Ascending aorta (tissue), 2 donors: ENCODE measurements at regions of chr18 and their contacts with region 1.

Region 1: GRCh38 chr18:48410095-48410920 is 1.1 kb upstream of the ZBTB7C start:
- DNase-seq: peak; percentile 62 to 95
- H3K4me3 ChIP-seq: peak overlapping the region; percentile 95 to 98
- H3K27ac ChIP-seq: peak overlapping the region; percentile 91 to 92
- H3K4me1 ChIP-seq: peaks cover 4 to 13% of the 10 kb centered on the region in 2 donors
- H3K27me3 ChIP-seq: no peaks in the 10 kb centered on the region
- CTCF ChIP-seq: no peak

Region 2: DNA sequence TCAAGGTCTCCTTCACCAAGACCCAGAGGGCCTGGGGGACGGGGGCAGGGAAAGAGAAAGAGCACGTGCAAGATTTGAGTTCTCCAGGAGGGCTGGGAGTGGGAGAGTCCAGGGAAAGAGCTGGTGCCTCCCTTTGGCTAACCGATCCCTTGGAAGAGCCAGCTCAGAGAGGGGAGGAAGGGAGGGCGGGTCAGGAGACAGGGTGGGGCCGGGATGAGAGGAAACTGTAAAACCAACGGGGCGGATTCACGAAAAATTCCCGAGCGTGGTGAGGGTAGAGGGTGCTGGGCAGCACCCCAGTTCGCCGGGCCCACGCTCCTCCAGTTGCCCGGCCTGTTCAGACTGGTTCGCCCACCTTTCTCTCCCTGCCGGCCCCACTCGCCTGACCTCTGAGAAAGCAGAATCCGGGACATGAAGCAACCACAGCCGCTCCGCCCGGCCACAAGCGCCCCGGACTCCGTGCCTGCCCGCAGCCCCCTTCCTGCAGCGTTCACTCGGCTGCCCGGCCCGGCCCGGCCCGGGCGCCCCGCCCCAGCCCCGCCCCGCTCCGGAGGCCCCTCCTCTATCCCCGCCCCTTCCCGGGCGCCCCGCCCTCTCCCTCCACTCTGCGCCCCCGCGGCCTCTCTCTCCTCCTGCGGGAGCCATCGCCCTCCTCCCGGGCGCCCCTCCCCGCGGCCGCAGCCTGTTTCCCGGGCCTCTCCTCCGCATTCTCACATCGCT is 249.0 kb before region 1 on chr18:
- intact Hi-C with region 1: loop called (anchors 2 kb)
- DNase-seq: peak in 1 of 2 donors; percentile 88
- H3K4me3 ChIP-seq: peak overlapping the region; percentile 67 to 93
- H3K27ac ChIP-seq: peak overlapping the region; percentile 86 to 94
- H3K4me1 ChIP-seq: peaks cover 2 to 12% of the 10 kb centered on the region in 2 donors
- H3K27me3 ChIP-seq: no peaks in the 10 kb centered on the region
- CTCF ChIP-seq: no peak

Region 3: GRCh38 chr18:48330403-48331022 is 79.8 kb before region 1 on chr18:
- intact Hi-C with region 1: loop called (anchors 2 kb)
- DNase-seq: no peak
- H3K4me3 ChIP-seq: no peak overlapping the region
- H3K27ac ChIP-seq: peak overlapping the region; percentile 24 to 58
- H3K4me1 ChIP-seq: peaks cover 7 to 19% of the 10 kb centered on the region in 2 donors
- H3K27me3 ChIP-seq: no peaks in the 10 kb centered on the region
- CTCF ChIP-seq: no peak

Region 4: GRCh38 chr18:48342125-48342524 is 68.2 kb before region 1 on chr18:
- intact Hi-C with region 1: loop called (anchors 5 kb)
- DNase-seq: no peak
- H3K4me3 ChIP-seq: peak overlapping the region in 1 of 2 donors; percentile 37
- H3K27ac ChIP-seq: peak overlapping the region; percentile 81 to 84
- H3K4me1 ChIP-seq: peaks cover 4 to 28% of the 10 kb centered on the region in 2 donors
- H3K27me3 ChIP-seq: no peaks in the 10 kb centered on the region
- CTCF ChIP-seq: no peak

Region 5: GRCh38 chr18:48575658-48576456 is 165.5 kb after region 1 on chr18:
- intact Hi-C with region 1: no loop called
- DNase-seq: no peak
- H3K4me3 ChIP-seq: peak overlapping the region in 1 of 2 donors; percentile 8
- H3K27ac ChIP-seq: peak overlapping the region; percentile 31 to 51
- H3K4me1 ChIP-seq: peaks cover 6 to 27% of the 10 kb centered on the region in 2 donors
- H3K27me3 ChIP-seq: no peaks in the 10 kb centered on the region
- CTCF ChIP-seq: no peak

Region 6: DNA sequence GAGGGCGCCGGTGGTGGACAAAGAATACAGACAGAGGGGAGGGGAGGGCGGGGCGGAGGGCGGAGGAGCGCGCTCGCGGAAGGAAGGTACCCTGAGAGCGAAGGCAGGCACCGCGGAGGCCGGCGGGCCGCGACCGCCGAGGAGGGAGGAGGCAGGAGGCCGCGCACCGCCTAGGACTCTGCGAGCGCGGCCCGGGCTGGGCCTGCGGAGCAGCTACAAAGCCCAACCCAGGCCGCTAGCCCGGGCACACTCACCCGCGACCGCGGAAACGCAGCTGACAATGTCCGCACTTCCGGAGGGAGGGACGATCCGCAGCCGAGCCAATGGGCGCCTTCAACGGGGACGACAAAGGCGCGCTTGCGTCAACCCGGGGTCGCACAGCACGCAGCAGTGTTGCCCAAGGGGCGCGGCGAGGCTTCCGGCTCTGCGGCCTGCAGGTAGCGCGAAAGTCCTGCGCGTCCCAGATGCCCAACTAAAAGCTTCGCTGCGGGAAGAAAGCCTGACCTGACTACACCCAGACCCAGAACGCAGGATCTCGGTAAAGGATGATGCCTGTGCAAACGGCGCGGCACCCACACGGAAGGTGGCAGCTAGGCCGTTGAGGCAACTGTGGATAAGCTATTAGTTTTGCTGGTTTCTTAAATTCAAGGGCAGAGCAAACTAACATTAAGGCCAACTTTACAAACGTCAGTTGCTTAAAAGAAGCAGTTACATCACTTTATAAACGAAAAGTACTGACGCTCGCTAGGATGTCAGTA is 1076.8 kb after region 1 on chr18 and contains the start of gene C18orf32:
- intact Hi-C with region 1: loop called (anchors 1 kb)
- DNase-seq: peak; percentile 71 to 97
- H3K4me3 ChIP-seq: peak within 1 kb of the TSS; percentile 58 to 96
- H3K27ac ChIP-seq: peak within 1 kb of the TSS; percentile 93 to 98
- H3K4me1 ChIP-seq: peaks cover 4 to 13% of the 10 kb centered on the region in 2 donors
- H3K27me3 ChIP-seq: no peaks in the 10 kb centered on the region
- CTCF ChIP-seq: no peak
- total RNA-seq, gene C18orf32: 7.8 TPM